OCI-LY7 (cell line): ENCODE measurements at regions of chr1 and their contacts with region 1.

Region 1: GRCh38 chr1:167553136-167554027 is at the start of gene CREG1:
- DNase-seq: peak; percentile 92
- H3K4me3 ChIP-seq: peak within 1 kb of the TSS; percentile 84
- H3K27ac ChIP-seq: peak within 1 kb of the TSS; percentile 40
- H3K4me1 ChIP-seq: peaks cover 58% of the 10 kb centered on the region
- CTCF ChIP-seq: 0 out of 2 replicates have a peak, but pooled peaks have one; percentile 10
- total RNA-seq, gene CREG1: 36.0 and 52.2 TPM in 2 replicates

Region 2: DNA sequence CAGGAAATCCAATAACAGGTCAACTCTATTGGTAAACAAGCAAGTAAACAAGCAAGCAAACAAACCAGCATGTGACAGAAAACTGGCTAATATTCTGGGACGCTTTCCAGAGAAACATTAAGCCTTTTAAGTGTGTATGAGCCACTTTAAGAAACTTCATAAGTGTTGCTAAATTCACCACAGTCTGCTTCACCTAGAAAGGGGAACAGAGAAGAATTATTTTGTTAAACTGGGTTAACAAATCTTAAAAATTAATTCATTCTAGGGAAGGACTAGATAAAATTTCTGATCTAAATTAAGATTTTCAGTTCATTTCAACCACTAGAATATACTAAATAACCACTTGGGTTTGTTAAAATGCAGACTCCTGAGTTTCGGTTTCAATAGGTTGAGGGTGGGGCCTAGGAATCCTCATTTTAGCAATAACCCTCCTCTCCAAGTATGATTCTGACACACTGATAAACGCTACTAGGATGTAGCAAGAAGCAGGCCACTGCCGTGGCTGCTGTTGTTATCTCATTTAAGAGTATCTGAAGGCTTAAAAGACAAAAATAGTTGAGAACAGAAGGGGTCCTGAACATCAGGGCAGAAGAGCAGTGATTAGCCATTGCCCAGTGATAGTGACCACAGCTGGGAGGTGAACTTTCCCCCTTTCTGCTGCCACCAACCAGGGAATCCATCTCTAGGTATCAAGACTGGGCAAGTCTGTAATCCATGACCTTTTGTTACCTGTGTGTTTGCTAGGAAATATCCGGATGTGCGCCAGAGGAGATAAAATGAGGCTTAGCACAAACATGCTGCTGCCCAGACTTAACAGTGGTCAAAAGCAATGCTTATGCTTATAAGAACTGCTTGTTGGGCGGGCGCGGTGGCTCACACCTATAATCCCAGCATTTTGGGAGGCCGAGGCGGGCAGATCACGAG is 11.0 kb before region 1 on chr1:
- CTCF ChIA-PET with region 1: interaction called, 5 read pairs
- POLR2A ChIA-PET with region 1: interaction called, 10 read pairs
- intact Hi-C with region 1: no loop called
- DNase-seq: peak; percentile 45
- H3K4me3 ChIP-seq: peak overlapping the region; percentile 39
- H3K27ac ChIP-seq: peak overlapping the region; percentile 76
- H3K4me1 ChIP-seq: peaks cover 80% of the 10 kb centered on the region
- CTCF ChIP-seq: no peak

Region 3: DNA sequence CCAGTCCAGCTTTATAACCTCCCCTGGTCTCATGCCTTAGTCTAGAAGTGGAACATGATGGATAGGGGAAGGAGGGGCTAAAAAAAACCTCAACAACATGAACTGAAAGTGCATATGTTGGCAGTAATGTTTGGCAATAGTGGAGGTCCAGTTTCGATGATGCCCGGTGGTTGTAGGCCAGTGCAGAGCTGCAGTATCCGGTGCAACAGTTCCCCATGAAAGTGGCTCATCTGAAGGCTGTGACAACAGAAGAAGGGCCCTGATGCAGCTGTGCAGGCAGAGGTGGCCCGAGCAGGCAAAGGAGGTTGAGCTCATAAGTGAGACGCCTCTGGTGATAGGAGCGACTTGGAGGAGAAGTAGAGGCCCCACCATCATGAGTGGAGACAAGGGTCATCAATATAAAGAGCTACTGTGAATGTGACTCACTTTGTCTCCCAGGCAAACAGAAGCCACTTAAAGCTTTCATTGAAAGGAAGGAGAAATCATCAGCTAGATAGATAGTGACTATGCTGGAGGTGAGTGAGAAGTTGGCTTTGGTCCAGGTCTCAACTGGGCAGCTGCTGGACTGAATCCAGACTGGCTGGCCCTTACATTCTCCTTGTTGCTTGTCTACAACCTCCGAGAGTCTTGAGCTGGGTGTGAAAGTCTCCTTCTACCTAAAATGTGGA is 10.3 kb after region 1 on chr1:
- CTCF ChIA-PET with region 1: interaction called, 7 read pairs
- POLR2A ChIA-PET with region 1: interaction called, 22 read pairs
- intact Hi-C with region 1: no loop called
- DNase-seq: no peak
- H3K4me3 ChIP-seq: no peak overlapping the region
- H3K27ac ChIP-seq: no peak overlapping the region
- H3K4me1 ChIP-seq: peaks cover 48% of the 10 kb centered on the region
- CTCF ChIP-seq: no peak

Region 4: GRCh38 chr1:167650269-167651160 is 97.1 kb after region 1 on chr1:
- CTCF ChIA-PET with region 1: no interaction called
- POLR2A ChIA-PET with region 1: no interaction called
- intact Hi-C with region 1: no loop called
- DNase-seq: peak; percentile 84
- H3K4me3 ChIP-seq: peak overlapping the region; percentile 12
- H3K27ac ChIP-seq: peak overlapping the region; percentile 64
- H3K4me1 ChIP-seq: peaks cover 74% of the 10 kb centered on the region
- CTCF ChIP-seq: no peak

Region 5: DNA sequence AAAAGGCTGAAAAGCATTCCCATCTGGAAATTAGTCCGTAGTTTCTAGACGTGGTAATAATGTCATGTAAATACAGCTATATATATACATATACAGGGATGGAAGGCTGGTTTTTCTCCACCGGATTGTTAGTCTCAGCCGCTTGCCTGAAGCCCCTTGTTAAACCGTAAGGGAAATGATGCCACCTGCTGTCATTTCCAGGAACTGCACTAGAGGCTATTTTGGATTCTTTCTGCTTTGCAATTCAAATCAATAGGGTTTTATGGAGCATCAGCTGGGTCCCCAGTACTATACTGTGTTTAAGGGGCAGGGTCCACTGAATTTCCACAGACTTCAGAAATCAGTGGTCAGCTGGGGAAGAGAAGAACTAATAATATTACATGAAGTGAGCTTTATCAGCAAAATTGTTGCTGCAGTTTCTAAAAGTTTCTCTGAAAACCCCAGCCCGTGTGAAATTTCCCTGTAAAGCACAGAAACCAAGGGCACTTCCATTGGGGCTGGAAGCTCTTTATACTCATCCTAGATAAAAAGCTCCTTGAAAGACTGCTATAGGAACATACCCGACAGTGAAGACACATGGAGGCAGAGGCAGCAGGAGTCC is 134.6 kb after region 1 on chr1:
- CTCF ChIA-PET with region 1: no interaction called
- POLR2A ChIA-PET with region 1: no interaction called
- intact Hi-C with region 1: loop called (anchors 1 kb)
- DNase-seq: peak; percentile 86
- H3K4me3 ChIP-seq: no peak overlapping the region
- H3K27ac ChIP-seq: peak overlapping the region; percentile 52
- H3K4me1 ChIP-seq: peaks cover 23% of the 10 kb centered on the region
- CTCF ChIP-seq: peak; percentile 98